Activated naive CD4-positive, alpha-beta T cell treated with anti-CD3 and anti-CD28 coated beads for 36 hours (primary cell): ENCODE measurements at regions of chr5 and their contacts with region 1.

Region 1: GRCh38 chr5:180831139-180832048 is 28.8 kb upstream of the MGAT1 start:
- DNase-seq: peak; percentile 84
- H3K4me3 Mint-ChIP-seq: peak overlapping the region; percentile 96
- H3K27ac Mint-ChIP-seq: peak overlapping the region; percentile 98
- H3K4me1 Mint-ChIP-seq: peaks cover 36% of the 10 kb centered on the region
- H3K27me3 Mint-ChIP-seq: no peaks in the 10 kb centered on the region

Region 2: DNA sequence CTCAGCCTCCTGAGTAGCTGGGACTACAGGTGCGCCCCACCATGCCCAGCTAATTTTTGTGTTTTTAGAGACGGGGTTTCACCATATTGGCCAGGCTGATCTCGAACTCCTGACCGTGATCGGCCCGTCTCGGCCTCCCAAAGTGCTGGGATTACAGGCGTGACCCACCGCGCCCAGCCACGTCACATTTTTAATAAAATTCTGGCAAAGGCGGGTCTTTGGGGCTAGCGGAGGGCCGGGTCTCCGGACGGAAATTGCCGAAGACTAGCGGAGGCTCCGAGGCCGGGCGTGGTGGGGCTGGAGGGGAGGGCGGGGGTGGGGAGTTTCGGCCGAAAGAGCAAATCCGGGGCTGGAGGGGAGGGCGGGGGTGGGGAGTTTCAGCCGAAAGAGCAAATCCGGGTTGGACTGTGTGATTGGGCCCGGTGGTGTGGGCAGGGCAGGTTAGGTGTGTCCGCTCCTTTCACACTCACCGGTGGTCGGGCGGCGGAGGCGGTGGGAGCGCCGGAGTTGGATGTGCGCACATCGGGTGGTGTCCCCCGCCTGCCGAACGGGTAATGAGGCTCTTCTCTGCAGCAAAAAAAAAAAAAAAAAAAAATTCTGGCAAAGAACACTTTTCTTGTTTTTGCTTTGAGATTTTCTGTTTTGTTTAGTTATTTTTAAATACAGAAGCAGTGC is 1254.0 kb before region 1 on chr5:
- CTCF ChIA-PET with region 1: no interaction called
- intact Hi-C with region 1: no loop called
- DNase-seq: no peak
- H3K4me3 Mint-ChIP-seq: no peak overlapping the region
- H3K27ac Mint-ChIP-seq: no peak overlapping the region
- H3K4me1 Mint-ChIP-seq: no peaks in the 10 kb centered on the region
- H3K27me3 Mint-ChIP-seq: no peaks in the 10 kb centered on the region

Region 3: DNA sequence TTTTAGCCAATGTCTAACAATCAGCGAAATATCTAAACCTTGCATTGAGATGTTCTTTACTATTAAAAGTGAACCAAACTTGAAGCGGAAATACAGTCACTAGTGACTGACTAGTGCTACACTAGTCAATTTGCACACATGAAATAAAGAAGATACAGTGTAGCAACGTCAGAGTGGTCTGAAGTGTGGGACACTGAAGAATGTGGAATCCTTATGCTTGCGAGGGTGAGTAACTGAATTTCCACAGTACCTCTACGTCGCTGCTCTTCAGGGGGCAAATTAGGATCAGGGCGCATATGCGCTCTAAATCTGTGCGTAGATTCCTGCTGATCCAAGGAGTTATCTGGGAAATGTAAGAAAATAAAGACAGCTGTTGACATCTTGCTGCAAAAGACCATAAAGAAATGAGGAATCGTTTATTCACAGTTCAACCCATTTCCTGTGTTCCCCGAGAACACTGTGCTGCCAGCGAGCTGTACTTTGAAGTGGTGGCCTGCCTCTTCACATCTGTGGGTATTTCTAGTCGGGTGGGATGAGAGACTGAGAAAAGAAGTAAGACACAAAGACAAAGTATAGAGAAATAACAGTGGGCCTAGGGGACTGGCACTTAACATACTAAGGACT is 142.2 kb before region 1 on chr5:
- CTCF ChIA-PET with region 1: interaction called, 4 read pairs
- intact Hi-C with region 1: loop called (anchors 10 kb)
- DNase-seq: peak; percentile 75
- H3K4me3 Mint-ChIP-seq: peak overlapping the region; percentile 59
- H3K27ac Mint-ChIP-seq: peak overlapping the region; percentile 60
- H3K4me1 Mint-ChIP-seq: peaks cover 63% of the 10 kb centered on the region
- H3K27me3 Mint-ChIP-seq: no peaks in the 10 kb centered on the region

Region 4: DNA sequence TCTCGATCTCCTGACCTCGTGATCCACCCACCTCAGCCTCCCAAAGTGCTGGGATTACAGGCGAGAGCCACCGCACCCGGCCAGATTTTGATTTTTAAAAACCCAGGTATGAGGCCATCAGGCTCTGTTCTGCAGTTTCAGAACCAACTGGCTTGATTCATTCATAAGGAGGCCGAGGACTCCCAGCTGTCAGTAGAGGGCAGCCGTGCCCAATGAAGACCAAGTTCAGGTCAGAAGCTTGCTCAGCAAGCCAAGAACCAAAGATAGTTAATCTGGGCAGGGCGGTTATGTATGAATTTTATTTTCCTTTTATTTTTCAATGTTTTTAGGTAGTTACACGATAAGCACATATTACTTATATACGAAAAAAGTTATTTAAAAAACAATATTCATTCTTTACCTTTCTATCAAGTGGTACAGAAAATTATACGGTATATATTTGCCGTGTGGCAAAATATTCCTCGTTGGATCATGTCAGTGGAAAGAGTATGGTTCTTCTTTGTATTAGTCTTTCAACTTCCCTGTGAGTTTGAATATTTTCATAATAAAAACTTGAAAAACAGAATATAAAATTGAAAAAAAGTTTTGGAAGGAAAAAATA is 46.8 kb before region 1 on chr5:
- CTCF ChIA-PET with region 1: interaction called, 12 read pairs
- intact Hi-C with region 1: no loop called
- DNase-seq: peak; percentile 89
- H3K4me3 Mint-ChIP-seq: no peak overlapping the region
- H3K27ac Mint-ChIP-seq: no peak overlapping the region
- H3K4me1 Mint-ChIP-seq: peaks cover 20% of the 10 kb centered on the region
- H3K27me3 Mint-ChIP-seq: no peaks in the 10 kb centered on the region

Region 5: GRCh38 chr5:180802325-180803180 is 28.8 kb before region 1 on chr5 and contains the start of gene MGAT1:
- CTCF ChIA-PET with region 1: interaction called, 17 read pairs
- intact Hi-C with region 1: loop called (anchors 1 kb)
- DNase-seq: peak; percentile 78
- H3K4me3 Mint-ChIP-seq: peak within 1 kb of the TSS; percentile 98
- H3K27ac Mint-ChIP-seq: peak within 1 kb of the TSS; percentile 99
- H3K4me1 Mint-ChIP-seq: peaks cover 77% of the 10 kb centered on the region
- H3K27me3 Mint-ChIP-seq: no peaks in the 10 kb centered on the region
- total RNA-seq, gene MGAT1: 70.0 to 75.2 TPM

Region 6: DNA sequence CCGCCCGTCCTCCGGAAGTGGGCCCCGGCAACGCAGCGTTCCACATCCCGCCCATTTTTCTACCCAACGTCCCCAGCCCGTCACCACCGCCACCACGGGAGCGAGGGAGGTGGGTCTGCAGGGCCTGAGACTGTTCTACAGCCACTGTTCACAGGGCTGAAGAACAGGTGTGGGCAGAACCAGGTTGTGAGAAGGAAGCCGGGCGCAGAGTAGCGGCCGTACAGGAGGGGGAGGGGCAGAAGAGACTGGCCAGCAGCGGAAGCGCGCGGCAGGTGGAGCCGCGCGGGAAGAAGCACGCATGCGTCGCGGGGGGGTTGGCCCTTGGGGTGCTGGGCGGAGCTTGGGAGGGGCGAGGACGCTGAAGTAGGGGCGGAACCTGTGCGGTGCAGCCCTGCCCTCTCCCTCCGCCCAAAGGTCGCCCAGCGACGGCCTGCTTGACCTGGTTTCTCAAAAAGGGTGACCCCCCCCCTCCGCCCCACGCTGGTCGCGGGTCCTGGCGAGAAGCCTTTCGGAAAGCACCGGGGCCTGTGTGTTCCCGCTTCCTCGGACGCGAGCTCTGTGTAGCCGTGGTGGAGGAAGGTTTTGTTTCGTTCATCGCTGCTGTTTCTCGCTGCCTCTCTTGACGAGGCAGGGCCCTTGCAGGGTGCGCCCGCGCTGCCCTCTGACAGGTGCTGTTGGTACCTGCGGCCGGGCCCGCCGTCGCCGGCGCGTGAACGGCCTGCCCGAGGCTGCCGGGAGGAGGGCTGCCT is 21.0 kb before region 1 on chr5:
- CTCF ChIA-PET with region 1: interaction called, 17 read pairs
- intact Hi-C with region 1: loop called (anchors 1 kb)
- DNase-seq: peak; percentile 96
- H3K4me3 Mint-ChIP-seq: peak overlapping the region; percentile 98
- H3K27ac Mint-ChIP-seq: peak overlapping the region; percentile 99
- H3K4me1 Mint-ChIP-seq: peaks cover 69% of the 10 kb centered on the region
- H3K27me3 Mint-ChIP-seq: no peaks in the 10 kb centered on the region